ENCODE measurements at regions of chr1 and their contacts with region 1.

Region 1: GRCh38 chr1:186985889-186986491 is 157.2 kb downstream of the PLA2G4A start:
- DNase-seq: no peak
- H3K4me3 ChIP-seq: no peak overlapping the region
- H3K27ac ChIP-seq: no peak overlapping the region
- H3K4me1 ChIP-seq: no peaks in the 10 kb centered on the region
- H3K27me3 ChIP-seq: no peaks in the 10 kb centered on the region
- CTCF ChIP-seq: peak; percentile 30 to 86 (median 74)
- POLR2A ChIP-seq: no peak

Region 2: DNA sequence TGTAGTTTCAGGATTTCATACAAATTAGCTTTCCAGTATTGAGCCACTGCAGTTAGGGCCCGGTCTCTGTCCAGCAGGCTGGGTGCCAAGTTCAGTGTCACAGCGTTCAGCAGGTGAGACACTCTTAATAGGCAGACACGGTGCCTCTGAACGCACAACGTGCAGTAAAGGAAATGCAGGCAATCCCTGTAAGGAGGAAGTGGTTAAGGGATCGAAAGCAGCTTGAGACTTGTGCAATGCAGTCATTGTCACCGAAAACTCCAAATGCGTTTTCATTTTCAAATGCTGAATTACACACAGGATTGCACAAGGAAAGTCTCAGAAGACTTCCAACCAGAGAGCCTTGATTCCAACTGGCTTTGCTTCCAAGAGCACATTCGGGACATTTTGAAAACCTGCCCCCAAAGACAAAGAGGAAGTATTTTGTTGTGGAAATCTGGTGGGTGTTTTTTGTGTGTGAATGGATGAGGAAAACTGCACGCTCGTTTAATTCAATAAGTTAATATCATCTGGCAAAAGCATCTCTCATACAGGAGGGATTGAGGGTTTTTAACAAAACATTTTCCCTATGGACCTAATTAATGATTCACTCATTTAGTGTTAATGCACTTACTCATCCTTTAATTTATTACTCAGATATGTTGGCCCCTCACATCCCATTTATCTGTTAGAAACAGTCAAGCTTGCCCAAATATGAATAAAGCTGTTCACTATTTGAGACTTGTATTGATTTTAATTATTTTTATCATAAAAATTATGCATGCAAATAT is 367.4 kb before region 1 on chr1:
- intact Hi-C with region 1: loop called (anchors 10 kb)
- DNase-seq: no peak
- H3K4me3 ChIP-seq: peak overlapping the region; percentile 24 to 28
- H3K27ac ChIP-seq: no peak overlapping the region
- H3K4me1 ChIP-seq: peaks cover 6% of the 10 kb centered on the region
- H3K27me3 ChIP-seq: no peaks in the 10 kb centered on the region
- CTCF ChIP-seq: no peak
- POLR2A ChIP-seq: no peak

Region 3: GRCh38 chr1:188188317-188188716 is 1202.3 kb after region 1 on chr1:
- intact Hi-C with region 1: no loop called
- DNase-seq: no peak
- H3K4me3 ChIP-seq: no peak overlapping the region
- H3K27ac ChIP-seq: no peak overlapping the region
- H3K4me1 ChIP-seq: no peaks in the 10 kb centered on the region
- H3K27me3 ChIP-seq: no peaks in the 10 kb centered on the region
- CTCF ChIP-seq: no peak
- POLR2A ChIP-seq: no peak